ENCODE measurements at regions of chr4 and their contacts with region 1.

Region 1: GRCh38 chr4:17468371-17469221 is 43.3 kb downstream of the QDPR start:
- DNase-seq: no peak
- ATAC-seq: no peak
- H3K4me3 Mint-ChIP-seq: no peak overlapping the region
- H3K27ac Mint-ChIP-seq: no peak overlapping the region
- H3K4me1 Mint-ChIP-seq: peaks cover 2% of the 10 kb centered on the region
- H3K27me3 Mint-ChIP-seq: no peaks in the 10 kb centered on the region
- CTCF ChIP-seq: no peak

Region 2: DNA sequence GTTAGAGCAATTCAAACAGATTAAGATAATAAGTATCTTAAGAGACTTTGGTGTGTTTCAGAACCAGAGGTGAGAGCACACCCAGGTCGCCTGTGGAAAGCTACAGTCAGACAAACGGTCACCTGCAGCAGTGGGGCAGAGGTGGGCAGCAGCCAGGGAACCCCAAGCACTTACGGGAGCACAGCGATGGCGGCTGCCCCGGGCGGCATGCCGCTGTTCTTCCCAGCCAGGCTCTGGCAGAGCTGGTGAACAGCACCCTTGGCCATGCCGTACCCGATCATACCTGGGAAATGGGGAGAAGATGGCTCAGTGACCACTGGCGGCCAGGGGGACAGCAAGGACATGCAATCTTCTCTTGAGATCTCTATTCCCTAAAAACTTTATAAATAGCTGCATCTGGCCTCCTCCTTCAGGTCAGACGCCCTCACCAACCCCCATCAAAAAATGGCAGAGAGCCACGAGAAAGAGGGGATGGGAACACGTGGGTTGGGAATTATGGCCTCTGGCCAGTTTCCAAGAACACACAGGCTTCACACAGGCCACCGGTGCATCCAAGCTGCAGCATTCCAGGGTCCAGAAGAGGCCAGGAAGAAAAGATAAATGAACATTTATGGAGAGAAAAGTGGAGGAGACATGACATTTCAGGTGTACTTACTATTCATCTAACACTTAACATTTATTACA is 23.6 kb after region 1 on chr4:
- CTCF ChIA-PET with region 1: interaction called, 13 read pairs
- POLR2A ChIA-PET with region 1: interaction called, 3 read pairs
- intact Hi-C with region 1: no loop called
- DNase-seq: no peak
- ATAC-seq: no peak
- H3K4me3 Mint-ChIP-seq: no peak overlapping the region
- H3K27ac Mint-ChIP-seq: no peak overlapping the region
- H3K4me1 Mint-ChIP-seq: peaks cover 14% of the 10 kb centered on the region
- H3K27me3 Mint-ChIP-seq: no peaks in the 10 kb centered on the region
- CTCF ChIP-seq: no peak